IMR-90 (cell line): ENCODE measurements at regions of chr4 and their contacts with region 1.

Region 1: GRCh38 chr4:75653845-75654503 is 19.2 kb downstream of the G3BP2 start:
- DNase-seq: peak; percentile 55
- ATAC-seq: peak; percentile 61; the same call in 1 of the 2 replicates
- H3K4me3 ChIP-seq: no peak overlapping the region
- H3K27ac ChIP-seq: no peak overlapping the region
- H3K4me1 ChIP-seq: no peaks in the 10 kb centered on the region
- H3K27me3 ChIP-seq: no peaks in the 10 kb centered on the region
- CTCF ChIP-seq: peak; percentile 51
- POLR2A ChIP-seq: no peak
- RAD21 ChIP-seq: peak; percentile 62

Region 2: DNA sequence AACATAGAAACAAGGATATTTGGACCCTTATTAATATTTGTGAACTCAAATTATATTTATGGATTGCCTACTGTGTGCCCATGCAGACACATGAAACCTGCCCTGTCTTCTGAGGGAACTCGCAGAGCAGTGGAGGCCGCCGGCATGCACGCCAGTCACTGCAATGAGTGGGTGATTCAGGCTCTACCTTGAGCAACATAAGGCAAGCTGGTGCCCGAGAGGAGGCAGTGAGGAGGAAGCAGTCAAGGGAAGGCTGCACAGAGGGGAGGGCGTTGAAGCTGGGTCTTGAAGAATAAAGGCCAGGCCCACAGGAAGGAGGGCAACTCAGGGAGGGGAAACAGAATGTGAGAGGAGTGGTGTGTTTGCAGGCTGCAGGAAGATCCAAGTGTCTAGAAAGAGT is 195.5 kb after region 1 on chr4:
- CTCF ChIA-PET with region 1: interaction called, 5 read pairs
- POLR2A ChIA-PET with region 1: no interaction called
- dilution Hi-C with region 1: no loop called
- in situ Hi-C with region 1: no loop called
- intact Hi-C with region 1: loop called (anchors 2 kb)
- DNase-seq: no peak
- ATAC-seq: no peak
- H3K4me3 ChIP-seq: no peak overlapping the region
- H3K27ac ChIP-seq: no peak overlapping the region
- H3K4me1 ChIP-seq: peaks cover 10% of the 10 kb centered on the region
- H3K27me3 ChIP-seq: peaks cover 7% of the 10 kb centered on the region
- CTCF ChIP-seq: no peak
- POLR2A ChIP-seq: no peak
- RAD21 ChIP-seq: no peak

Region 3: GRCh38 chr4:75940692-75941253 is 286.8 kb after region 1 on chr4 and contains the start of gene NAAA:
- CTCF ChIA-PET with region 1: no interaction called
- POLR2A ChIA-PET with region 1: no interaction called
- dilution Hi-C with region 1: no loop called
- in situ Hi-C with region 1: no loop called
- intact Hi-C with region 1: loop called (anchors 10 kb)
- DNase-seq: peak; percentile 65
- ATAC-seq: peak; percentile 92
- H3K4me3 ChIP-seq: peak within 1 kb of the TSS; percentile 53
- H3K27ac ChIP-seq: peak within 1 kb of the TSS; percentile 22
- H3K4me1 ChIP-seq: no peaks in the 10 kb centered on the region
- H3K27me3 ChIP-seq: no peaks in the 10 kb centered on the region
- CTCF ChIP-seq: peak; percentile 43
- POLR2A ChIP-seq: no peak
- RAD21 ChIP-seq: no peak; the same call in 1 of the 2 replicates
- total RNA-seq, gene NAAA: 15.8 and 17.6 TPM in 2 replicates

Region 4: DNA sequence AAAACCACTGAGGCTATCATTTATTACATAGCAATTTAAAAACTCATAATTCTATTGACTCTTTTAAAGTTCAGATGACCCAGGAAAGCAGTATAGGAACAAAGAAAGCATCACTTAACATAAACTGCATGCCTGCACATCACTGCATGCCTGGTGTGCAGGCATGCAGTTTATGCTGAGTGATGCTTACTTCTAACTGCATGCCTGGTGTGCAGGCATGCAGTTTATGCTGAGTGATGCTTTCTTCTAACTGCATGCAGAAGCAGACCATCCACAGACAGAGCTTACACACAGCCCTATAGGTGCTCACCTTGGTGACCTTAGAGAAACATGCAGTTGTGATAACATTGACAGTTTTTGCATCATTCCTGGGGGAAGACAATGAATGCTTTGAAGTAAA is 319.8 kb after region 1 on chr4:
- CTCF ChIA-PET with region 1: no interaction called
- POLR2A ChIA-PET with region 1: no interaction called
- dilution Hi-C with region 1: no loop called
- in situ Hi-C with region 1: no loop called
- intact Hi-C with region 1: loop called (anchors 10 kb)
- DNase-seq: no peak
- ATAC-seq: no peak
- H3K4me3 ChIP-seq: no peak overlapping the region
- H3K27ac ChIP-seq: no peak overlapping the region
- H3K4me1 ChIP-seq: no peaks in the 10 kb centered on the region
- H3K27me3 ChIP-seq: no peaks in the 10 kb centered on the region
- CTCF ChIP-seq: no peak
- POLR2A ChIP-seq: no peak
- RAD21 ChIP-seq: no peak